ENCODE measurements at regions of chr14 and their contacts with region 1.

Region 1: GRCh38 chr14:22510527-22511110 is 78.4 kb downstream of the DAD1 start:
- DNase-seq: peak; percentile 92
- H3K4me3 ChIP-seq: no peak overlapping the region
- H3K27me3 ChIP-seq: peaks cover 2% of the 10 kb centered on the region; the same call in 1 of the 2 replicates
- CTCF ChIP-seq: no peak

Region 2: DNA sequence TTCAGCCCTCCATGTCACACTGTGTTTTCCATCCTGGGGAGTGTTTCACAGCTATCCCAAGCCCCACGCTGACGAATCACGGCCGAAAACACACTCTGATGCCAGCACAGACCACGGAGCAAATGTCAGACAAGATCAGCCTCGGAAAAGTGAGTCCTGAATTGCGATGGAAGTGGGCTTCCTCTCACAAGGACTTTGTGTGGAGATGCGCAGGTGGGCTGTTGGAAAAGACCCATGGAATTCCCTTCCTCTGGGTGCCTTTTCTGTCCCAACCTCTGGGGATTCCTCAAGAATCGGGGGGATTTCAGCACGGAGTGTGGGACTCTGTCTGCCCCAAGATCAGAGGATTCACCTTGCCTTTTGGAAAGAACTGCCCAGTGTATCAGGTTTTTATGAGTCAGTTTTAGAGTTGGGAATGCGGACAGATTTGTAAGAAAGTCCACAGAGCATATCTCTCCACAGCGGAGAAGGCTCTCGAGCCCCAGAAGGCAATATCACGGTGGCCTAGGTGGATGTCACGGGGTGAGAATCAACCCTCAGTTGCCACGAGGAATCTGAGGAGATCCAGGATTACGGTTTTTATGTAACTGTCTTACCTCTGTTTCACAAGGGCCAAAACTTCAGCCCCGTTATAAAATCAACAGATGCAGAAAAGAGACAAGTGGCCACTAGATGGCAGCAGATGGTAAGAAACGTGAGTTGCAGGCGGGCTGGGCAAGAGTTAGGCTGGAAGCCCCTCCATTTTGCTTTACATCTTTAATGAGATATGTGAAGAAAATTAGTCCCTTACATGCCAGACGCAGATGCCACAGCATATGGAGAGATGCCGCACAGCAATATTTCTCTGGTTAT is 123.5 kb before region 1 on chr14:
- CTCF ChIA-PET with region 1: no interaction called
- POLR2A ChIA-PET with region 1: no interaction called
- DNase-seq: no peak
- H3K4me3 ChIP-seq: no peak overlapping the region
- H3K27me3 ChIP-seq: peaks cover 9% of the 10 kb centered on the region
- CTCF ChIP-seq: peak; percentile 74

Region 3: DNA sequence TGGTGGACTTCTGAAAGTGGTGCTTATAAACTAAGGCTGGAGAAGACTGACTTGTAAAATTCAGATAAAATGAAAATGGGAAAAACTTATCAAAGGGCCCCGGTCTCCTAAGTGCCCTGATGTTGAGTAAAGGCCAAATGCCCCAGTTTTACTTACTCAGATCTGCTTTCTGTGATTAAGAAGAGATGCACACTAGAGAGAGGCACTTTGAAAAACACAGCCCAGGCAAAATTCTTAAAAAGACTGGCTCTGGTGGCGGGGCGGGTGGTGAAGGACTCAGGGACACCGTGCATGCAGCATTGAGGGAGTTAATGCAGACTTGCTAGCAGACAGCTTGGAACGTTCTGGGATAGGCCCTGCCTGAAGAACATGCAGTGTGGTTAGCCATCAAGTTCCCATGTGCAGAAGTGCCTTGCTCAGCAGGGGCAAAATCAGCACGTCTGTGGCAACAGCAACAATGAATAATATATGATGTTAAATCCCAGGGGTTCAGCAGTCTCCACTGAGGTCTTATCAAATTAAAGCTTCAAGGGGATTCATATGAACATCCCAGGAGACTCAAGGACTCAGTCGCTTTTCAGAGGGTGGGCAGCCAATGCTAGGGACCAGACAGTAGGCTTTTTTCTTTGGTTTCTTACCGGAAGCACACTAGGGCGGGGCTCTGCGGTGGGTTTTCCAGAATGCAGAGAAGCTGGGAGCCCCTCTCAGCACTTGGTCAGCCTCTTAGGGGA is 26.6 kb before region 1 on chr14:
- CTCF ChIA-PET with region 1: interaction called, 3 read pairs
- POLR2A ChIA-PET with region 1: interaction called, 22 read pairs
- DNase-seq: no peak
- H3K4me3 ChIP-seq: no peak overlapping the region
- H3K27me3 ChIP-seq: peaks cover 23% of the 10 kb centered on the region
- CTCF ChIP-seq: no peak